Endothelial cell of umbilical vein (primary cell): ENCODE measurements at regions of chr1 and their contacts with region 1.

Region 1: DNA sequence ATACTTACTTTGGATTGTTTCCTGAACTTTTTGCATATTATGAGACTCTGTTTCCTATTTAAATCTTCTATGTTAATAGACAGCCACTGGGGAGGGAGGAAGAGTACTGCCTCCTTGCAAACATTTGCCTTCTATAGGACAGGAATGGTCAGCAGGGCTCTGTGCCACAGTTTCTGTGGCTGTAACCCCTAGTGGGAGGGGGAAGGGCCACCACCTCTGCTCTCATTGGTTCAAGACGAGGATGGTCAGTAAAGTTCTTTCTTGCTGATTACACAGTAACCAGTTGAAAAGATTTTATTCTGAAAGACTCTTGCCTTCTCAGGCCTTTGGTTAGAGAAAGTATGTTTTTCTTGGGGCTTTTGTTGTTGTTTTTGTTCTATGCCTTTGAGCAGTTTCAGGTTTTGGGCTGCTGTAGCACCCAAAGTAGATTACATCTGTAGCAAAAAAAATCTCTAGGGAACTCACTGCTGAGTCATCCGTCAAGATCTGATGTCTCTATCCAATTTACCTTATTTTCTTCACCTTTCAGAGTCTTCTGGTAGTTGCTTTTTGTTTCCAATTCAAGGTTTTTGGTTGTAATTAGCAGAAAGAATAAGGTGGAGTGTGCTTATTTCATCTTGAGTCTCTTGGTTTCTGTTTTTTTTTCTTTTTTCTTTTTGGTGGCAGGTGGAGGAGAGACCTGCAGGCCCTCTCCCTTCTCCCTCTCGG is 23.1 kb downstream of the SLC35A3 start:
- DNase-seq: no peak
- H3K4me3 ChIP-seq: no peak overlapping the region
- H3K27ac ChIP-seq: no peak overlapping the region
- H3K4me1 ChIP-seq: no peaks in the 10 kb centered on the region
- H3K27me3 ChIP-seq: no peaks in the 10 kb centered on the region
- CTCF ChIP-seq: no peak
- POLR2A ChIP-seq: no peak

Region 2: DNA sequence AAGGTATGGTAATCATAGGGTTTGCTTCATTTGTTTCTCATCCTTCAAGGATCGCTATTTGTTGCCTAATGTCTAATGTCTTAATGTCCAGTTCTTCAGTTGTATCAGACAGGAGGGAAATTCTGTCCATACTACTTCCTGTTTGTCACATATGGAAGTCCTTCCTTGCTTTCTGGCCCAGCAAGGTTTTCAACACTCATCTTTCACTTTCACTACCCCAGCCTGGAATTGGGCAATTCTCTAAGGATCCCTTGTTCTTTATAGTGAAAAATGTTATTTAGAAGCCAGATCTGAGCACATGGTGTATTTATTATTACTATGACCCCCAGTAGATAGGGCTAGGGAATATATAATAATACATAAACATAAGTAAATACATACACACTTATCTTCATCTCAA is 73.7 kb before region 1 on chr1:
- CTCF ChIA-PET with region 1: no interaction called
- POLR2A ChIA-PET with region 1: no interaction called
- dilution Hi-C with region 1: no loop called
- intact Hi-C with region 1: no loop called
- DNase-seq: no peak
- H3K4me3 ChIP-seq: no peak overlapping the region
- H3K27ac ChIP-seq: no peak overlapping the region
- H3K4me1 ChIP-seq: no peaks in the 10 kb centered on the region
- H3K27me3 ChIP-seq: no peaks in the 10 kb centered on the region
- CTCF ChIP-seq: no peak
- POLR2A ChIP-seq: no peak

Region 3: GRCh38 chr1:99935534-99935933 is 57.4 kb before region 1 on chr1:
- CTCF ChIA-PET with region 1: no interaction called
- POLR2A ChIA-PET with region 1: no interaction called
- dilution Hi-C with region 1: no loop called
- intact Hi-C with region 1: loop called (anchors 10 kb)
- DNase-seq: no peak
- H3K4me3 ChIP-seq: no peak overlapping the region
- H3K27ac ChIP-seq: no peak overlapping the region
- H3K4me1 ChIP-seq: no peaks in the 10 kb centered on the region
- H3K27me3 ChIP-seq: no peaks in the 10 kb centered on the region
- CTCF ChIP-seq: no peak
- POLR2A ChIP-seq: no peak